A549 (cell line): ENCODE measurements at regions of chr16 and their contacts with region 1.

Region 1: GRCh38 chr16:10964039-10964890 is 19.9 kb downstream of the CLEC16A start:
- DNase-seq: peak; percentile 70 to 77
- ATAC-seq: peak; percentile 93 to 99
- H3K4me3 ChIP-seq: no peak overlapping the region
- H3K27ac ChIP-seq: no peak overlapping the region
- H3K4me1 ChIP-seq: 0 out of 3 replicates have a peak, but pooled peaks cover 3% of the 10 kb centered on the region
- CTCF ChIP-seq: peak; percentile 93
- EP300 ChIP-seq: no peak
- POLR2A ChIP-seq: no peak
- RAD21 ChIP-seq: peak; percentile 87 to 88

Region 2: GRCh38 chr16:10981697-10982216 is 17.5 kb after region 1 on chr16:
- CTCF ChIA-PET with region 1: interaction called, 69 read pairs
- POLR2A ChIA-PET with region 1: no interaction called
- DNase-seq: peak; percentile 21 to 53
- ATAC-seq: peak; percentile 85 to 93; a peak in 5 of 6 replicates
- H3K4me3 ChIP-seq: no peak overlapping the region
- H3K27ac ChIP-seq: no peak overlapping the region
- H3K4me1 ChIP-seq: no peaks in the 10 kb centered on the region
- CTCF ChIP-seq: peak; percentile 31; the same call in 2 of the 3 replicates
- EP300 ChIP-seq: no peak
- POLR2A ChIP-seq: no peak
- RAD21 ChIP-seq: 0 out of 5 replicates have a peak, but pooled peaks of 1 of the 2 experiments have one; percentile 6

Region 3: GRCh38 chr16:11066231-11066870 is 102.1 kb after region 1 on chr16:
- CTCF ChIA-PET with region 1: interaction called, 12 read pairs
- POLR2A ChIA-PET with region 1: no interaction called
- DNase-seq: no peak
- ATAC-seq: no peak
- H3K4me3 ChIP-seq: no peak overlapping the region
- H3K27ac ChIP-seq: no peak overlapping the region
- H3K4me1 ChIP-seq: no peaks in the 10 kb centered on the region
- CTCF ChIP-seq: no peak
- EP300 ChIP-seq: no peak
- POLR2A ChIP-seq: no peak
- RAD21 ChIP-seq: no peak

Region 4: DNA sequence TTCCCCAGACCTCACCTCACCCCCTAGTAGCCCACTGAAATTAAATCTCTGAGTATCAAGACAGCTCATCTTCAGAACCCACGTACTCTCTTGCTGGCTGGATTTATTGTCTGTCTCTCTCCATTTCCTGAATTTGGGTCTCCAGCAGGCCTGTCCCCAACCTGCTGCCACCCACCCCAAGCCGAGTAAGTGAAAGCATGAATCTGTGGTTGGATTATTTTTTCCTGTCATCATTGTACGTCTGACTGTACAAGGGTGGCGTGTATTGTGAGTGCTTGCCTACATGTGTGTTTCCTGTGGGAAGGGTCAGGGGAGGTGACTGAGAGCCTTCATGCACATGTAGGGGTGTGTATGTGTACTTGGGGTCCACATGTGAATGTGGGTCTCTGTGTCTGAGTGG is 299.5 kb after region 1 on chr16:
- CTCF ChIA-PET with region 1: interaction called, 364 read pairs
- POLR2A ChIA-PET with region 1: no interaction called
- DNase-seq: no peak
- ATAC-seq: no peak
- H3K4me3 ChIP-seq: no peak overlapping the region
- H3K27ac ChIP-seq: no peak overlapping the region
- H3K4me1 ChIP-seq: no peaks in the 10 kb centered on the region
- CTCF ChIP-seq: no peak
- EP300 ChIP-seq: no peak
- POLR2A ChIP-seq: no peak
- RAD21 ChIP-seq: no peak

Region 5: DNA sequence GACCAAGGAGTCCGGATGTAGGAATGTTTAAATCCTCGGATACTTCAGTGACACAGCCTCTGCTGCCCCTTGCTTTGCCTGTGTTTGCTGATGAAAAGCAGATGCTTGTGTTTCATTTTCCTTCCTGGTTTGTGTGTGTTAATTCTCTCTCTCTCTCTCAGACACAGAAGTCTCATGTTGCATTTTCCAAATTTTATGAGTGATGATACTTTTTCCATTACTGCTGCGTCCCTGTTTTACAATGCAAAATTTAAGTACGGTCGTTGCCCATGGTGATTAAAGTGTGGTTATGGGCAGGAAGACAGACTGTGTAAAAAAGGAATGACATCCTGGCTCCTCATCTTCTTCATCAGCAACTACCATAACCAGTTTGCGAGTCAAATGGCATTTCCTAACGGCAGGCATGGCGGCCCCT is 386.7 kb after region 1 on chr16:
- CTCF ChIA-PET with region 1: interaction called, 32 read pairs
- POLR2A ChIA-PET with region 1: no interaction called
- DNase-seq: no peak
- ATAC-seq: no peak
- H3K4me3 ChIP-seq: no peak overlapping the region
- H3K27ac ChIP-seq: no peak overlapping the region
- H3K4me1 ChIP-seq: peaks cover 5% of the 10 kb centered on the region; the same call in 2 of the 3 replicates
- CTCF ChIP-seq: no peak
- EP300 ChIP-seq: no peak
- POLR2A ChIP-seq: no peak
- RAD21 ChIP-seq: no peak

Region 6: DNA sequence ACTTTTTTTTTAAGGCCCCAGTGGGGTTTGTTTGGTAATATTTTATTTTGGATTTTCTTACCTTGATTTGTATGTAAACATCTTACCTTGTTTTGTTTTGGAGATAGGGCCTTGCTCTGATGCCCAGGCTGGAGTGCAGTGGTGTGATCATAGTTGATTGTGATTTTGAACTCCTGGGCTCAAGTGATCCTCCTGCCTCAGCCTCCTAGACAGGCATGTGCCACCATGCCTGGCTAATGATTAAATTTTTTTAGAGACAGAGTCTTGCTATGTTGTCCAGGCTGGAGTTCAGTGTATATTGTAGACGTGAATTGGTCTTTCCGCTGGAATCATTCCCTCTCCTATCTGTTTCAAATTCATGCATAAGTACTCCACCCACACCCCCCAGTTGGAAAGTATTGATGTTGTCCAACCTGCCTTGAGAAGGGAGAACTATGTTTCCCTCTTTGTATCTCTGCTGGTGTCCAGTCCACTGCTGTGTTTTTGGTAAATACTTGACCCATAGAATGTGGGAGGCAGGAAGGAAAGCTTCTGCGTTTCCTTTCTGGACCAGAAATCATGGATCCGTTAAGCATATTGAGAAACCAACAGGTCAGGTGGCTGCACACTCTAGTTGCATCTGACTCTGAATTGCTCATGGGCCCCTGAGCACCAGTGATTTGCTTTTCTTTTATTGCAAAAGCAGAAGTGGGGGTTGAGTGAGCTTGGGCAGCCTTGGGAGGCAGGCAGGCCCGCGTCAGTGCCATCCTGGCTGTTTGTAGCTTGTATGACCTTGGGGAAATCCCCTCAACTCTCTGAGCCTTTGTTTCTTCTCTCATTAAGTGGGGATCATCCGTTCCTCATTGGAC is 406.0 kb after region 1 on chr16:
- CTCF ChIA-PET with region 1: interaction called, 11 read pairs
- POLR2A ChIA-PET with region 1: no interaction called
- DNase-seq: no peak
- ATAC-seq: no peak; a peak in 1 of 6 replicates
- H3K4me3 ChIP-seq: no peak overlapping the region
- H3K27ac ChIP-seq: no peak overlapping the region
- H3K4me1 ChIP-seq: no peaks in the 10 kb centered on the region
- CTCF ChIP-seq: no peak
- EP300 ChIP-seq: no peak
- POLR2A ChIP-seq: no peak
- RAD21 ChIP-seq: no peak

Region 7: DNA sequence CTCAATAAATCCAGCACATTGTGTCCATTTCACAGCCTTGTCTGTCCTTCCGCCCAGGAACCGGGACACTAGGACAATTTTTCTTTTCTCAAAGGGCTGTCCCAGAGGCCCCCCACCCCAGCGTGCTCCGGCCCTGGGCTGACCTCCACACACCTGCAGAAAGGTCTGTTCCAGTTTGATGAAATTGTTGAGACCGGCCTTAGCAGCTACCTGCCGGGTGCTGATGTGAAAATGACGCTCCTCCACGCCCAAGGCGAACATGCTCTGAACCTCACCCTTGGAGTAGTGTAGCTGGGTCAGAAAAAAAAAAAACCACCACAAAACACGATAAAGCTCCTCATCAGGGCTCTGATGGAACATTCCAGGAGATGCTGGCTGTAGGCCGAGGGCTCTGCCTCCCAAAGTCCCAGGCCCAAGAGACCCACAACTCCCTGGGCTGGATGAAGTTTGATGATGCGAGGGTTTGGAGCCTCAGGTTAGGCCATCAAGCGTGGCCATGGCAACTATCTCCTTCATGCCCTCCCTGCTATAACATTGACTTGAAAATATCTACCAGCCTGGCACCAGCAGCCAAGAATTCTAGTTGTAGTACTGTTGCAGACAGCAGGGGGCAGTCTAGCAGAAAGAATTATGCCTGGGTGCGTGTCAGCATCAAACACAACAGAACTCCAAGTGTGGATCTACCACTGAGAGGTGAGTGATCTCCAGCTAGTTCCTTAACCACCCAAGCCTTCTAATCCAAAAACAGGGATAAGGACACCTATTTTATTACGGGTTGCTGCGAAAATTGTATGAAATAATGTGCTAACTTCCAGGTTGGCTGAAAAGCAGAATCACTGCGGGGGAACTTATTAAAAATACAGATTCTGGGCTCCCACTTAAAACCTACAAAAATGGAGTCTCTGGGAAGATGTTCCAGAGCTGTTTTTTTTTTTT is 443.1 kb after region 1 on chr16:
- CTCF ChIA-PET with region 1: interaction called, 15 read pairs
- POLR2A ChIA-PET with region 1: no interaction called
- DNase-seq: peak; percentile 84 to 86
- ATAC-seq: peak; percentile 61 to 80
- H3K4me3 ChIP-seq: no peak overlapping the region
- H3K27ac ChIP-seq: peak overlapping the region; percentile 57 to 77
- H3K4me1 ChIP-seq: peaks cover 35% of the 10 kb centered on the region
- CTCF ChIP-seq: peak; percentile 79
- EP300 ChIP-seq: no peak
- POLR2A ChIP-seq: no peak
- RAD21 ChIP-seq: peak; percentile 93 to 94